ENCODE measurements at regions of chr14 and their contacts with region 1.

Region 1: GRCh38 chr14:92513204-92513973 is at the start of gene RIN3:
- DNase-seq: peak in 9 of 10 donors; percentile 18 to 68 (median 43)
- ATAC-seq: peak; percentile 52 to 62
- H3K4me3 Mint-ChIP-seq: peak within 1 kb of the TSS; percentile 59 to 88 (median 80)
- H3K27ac Mint-ChIP-seq: peak within 1 kb of the TSS; percentile 66 to 92 (median 84)
- H3K4me1 Mint-ChIP-seq: peaks cover 29 to 55% (median 54%) of the 10 kb centered on the region in 4 donors
- H3K27me3 Mint-ChIP-seq: no peaks in the 10 kb centered on the region
- polyA plus RNA-seq, gene RIN3: 16.8 to 45.8 (median 30.0) TPM

Region 2: DNA sequence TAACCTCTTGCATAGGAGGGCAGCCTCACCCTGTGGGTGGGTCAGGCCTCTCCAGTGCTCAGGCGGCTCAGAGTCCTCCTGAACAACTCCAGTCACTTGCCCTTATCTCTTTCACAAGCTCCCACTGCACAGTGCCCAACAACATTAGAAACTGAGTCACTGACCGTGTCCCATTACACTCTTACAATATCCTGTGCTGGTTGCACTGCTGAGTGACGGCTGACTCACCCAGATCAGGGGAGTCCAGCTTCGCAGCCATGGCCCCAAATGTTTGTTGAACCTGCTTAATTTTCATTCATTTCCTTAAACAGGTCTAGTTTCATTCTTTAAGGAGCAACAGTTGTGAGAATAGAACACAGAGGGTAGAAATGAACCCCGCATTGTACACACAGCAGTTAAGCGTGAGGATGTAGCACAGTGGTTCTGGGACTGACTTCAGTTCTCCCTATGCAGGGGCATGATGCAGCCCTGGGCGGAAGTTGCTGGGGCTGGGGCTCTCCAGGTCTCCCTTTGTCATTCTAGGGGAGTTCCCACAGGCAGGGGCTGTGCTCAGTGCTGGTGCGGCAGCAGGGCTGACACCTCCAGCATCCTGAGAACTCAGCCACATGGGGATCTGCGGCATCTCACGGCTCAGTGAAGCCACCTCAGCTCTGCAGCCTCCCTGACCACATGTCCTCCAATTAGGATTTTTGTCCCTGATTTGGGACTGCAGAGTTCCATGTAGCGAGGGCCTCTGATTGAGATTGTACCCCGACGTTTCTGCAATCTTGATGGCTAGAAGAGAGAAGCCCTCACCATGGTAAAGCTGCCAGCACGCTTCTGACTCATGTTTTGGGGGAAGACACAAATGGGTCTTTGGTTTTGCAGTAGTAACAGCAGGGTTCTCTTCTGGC is 1285.0 kb before region 1 on chr14:
- POLR2A ChIA-PET with region 1: no interaction called
- DNase-seq: peak; percentile 48 to 78 (median 64)
- ATAC-seq: peak; percentile 78 to 87
- H3K4me3 Mint-ChIP-seq: peak overlapping the region; percentile 26 to 84 (median 69)
- H3K27ac Mint-ChIP-seq: peak overlapping the region; percentile 4 to 95 (median 83)
- H3K4me1 Mint-ChIP-seq: peaks cover 38 to 92% (median 85%) of the 10 kb centered on the region in 4 donors
- H3K27me3 Mint-ChIP-seq: no peaks in the 10 kb centered on the region

Region 3: DNA sequence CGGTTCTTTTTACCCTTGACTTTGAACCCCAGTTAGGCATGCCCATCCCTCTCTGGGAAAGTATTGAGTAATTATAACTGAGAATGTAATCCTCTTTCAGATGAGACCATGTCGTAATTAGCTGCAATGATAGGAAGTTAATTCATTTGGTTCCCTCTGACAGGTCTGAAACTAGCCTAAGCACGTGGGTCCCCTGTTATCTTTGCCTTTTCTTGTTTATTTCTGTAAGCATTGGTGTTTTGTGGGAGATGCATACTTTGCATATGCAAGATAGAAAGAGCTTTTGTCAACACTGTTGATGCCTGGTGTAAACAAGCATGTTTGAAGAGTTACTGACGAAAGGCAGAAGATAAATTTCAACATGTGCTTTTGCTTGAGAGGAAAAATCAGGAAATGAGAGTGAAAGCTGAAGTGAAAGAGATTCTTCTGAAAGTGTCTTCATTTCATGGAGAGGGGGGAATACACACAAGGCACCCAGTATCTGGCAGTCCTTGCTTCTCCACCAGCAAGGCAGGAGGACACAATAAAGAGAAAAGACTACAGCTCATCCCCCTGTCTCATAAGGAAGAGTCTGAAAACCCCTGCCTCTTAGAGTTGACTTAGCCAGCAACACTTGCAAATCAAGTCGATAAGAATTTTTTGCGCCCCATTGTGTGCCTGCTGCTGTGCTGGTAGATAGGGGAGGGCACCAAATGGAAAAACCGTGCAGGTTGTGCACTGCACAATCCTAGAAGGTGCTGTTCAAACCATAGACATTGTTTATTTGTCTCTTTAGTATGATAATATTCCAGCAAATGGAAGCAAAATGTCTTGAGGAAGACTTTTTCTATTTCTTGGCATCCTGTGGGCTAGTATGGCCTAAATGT is 112.6 kb before region 1 on chr14:
- POLR2A ChIA-PET with region 1: no interaction called
- DNase-seq: no peak
- ATAC-seq: no peak
- H3K4me3 Mint-ChIP-seq: peak overlapping the region in 1 of 10 donors; percentile 3
- H3K27ac Mint-ChIP-seq: peak overlapping the region in 2 of 10 donors; percentile 4 to 23
- H3K4me1 Mint-ChIP-seq: peaks cover 0 to 21% (median under 1%) of the 10 kb centered on the region in 4 donors
- H3K27me3 Mint-ChIP-seq: peaks cover 0 to 3% (median 1%) of the 10 kb centered on the region in 5 donors

Region 4: DNA sequence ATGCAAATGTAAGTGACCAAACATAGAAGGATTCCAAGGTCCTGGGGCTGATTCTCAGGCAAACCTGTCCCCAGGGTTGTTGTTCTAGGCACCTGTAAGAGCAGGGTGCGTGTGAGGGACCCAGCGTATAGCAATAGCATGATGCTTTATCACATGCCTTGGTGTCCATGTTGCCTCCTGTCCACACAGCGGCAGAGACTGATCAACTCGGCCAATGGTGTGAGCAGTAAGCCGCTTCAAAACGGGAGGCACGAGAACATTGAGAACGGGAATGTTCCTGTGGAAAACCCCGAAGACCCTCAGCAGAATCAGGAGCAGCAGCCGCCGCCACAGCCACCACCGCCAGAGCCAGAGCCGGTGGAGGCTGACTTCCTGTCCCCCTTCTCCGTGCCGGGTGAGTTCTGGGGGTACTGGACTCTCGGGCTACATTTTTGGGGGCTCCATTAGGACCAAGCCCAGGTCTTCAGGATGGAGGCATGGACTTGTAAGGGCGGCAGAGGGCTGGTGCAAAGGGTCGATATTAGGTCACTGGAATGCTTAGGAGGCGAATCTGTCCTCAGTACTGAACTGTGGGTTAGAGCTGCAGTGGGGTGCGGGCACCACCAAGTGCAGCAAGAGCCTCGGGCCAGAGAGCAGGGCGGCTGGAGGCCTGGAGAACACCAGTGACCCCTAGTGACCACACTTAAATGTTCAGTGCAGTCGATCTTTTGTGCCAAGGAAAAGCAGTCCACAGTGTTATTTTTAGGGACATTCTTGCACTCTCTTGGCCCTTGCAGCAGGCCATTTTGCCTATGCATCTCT is 57.0 kb before region 1 on chr14:
- POLR2A ChIA-PET with region 1: no interaction called
- DNase-seq: no peak
- ATAC-seq: no peak
- H3K4me3 Mint-ChIP-seq: no peak overlapping the region
- H3K27ac Mint-ChIP-seq: peak overlapping the region in 2 of 10 donors; percentile 14 to 46
- H3K4me1 Mint-ChIP-seq: peaks cover 0 to 26% (median 17%) of the 10 kb centered on the region in 4 donors
- H3K27me3 Mint-ChIP-seq: no peaks in the 10 kb centered on the region

Region 5: GRCh38 chr14:92524602-92525185 is 11.3 kb after region 1 on chr14:
- POLR2A ChIA-PET with region 1: interaction called, 29 read pairs
- DNase-seq: no peak
- ATAC-seq: peak; percentile 53 to 59
- H3K4me3 Mint-ChIP-seq: peak overlapping the region in 5 of 10 donors; percentile 12 to 30 (median 24)
- H3K27ac Mint-ChIP-seq: peak overlapping the region in 9 of 10 donors; percentile 40 to 91 (median 79)
- H3K4me1 Mint-ChIP-seq: peaks cover 29 to 91% (median 76%) of the 10 kb centered on the region in 4 donors
- H3K27me3 Mint-ChIP-seq: no peaks in the 10 kb centered on the region

Region 6: GRCh38 chr14:92531106-92531873 is 17.9 kb after region 1 on chr14:
- POLR2A ChIA-PET with region 1: interaction called, 17 read pairs
- DNase-seq: peak; percentile 55 to 94 (median 86)
- ATAC-seq: peak; percentile 88 to 91
- H3K4me3 Mint-ChIP-seq: peak overlapping the region; percentile 68 to 92 (median 88)
- H3K27ac Mint-ChIP-seq: peak overlapping the region; percentile 97 to 100 (median 99)
- H3K4me1 Mint-ChIP-seq: peaks cover 38 to 91% (median 83%) of the 10 kb centered on the region in 4 donors
- H3K27me3 Mint-ChIP-seq: no peaks in the 10 kb centered on the region

Region 7: GRCh38 chr14:92568621-92569479 is 55.5 kb after region 1 on chr14:
- POLR2A ChIA-PET with region 1: interaction called, 11 read pairs
- DNase-seq: peak in 7 of 10 donors; percentile 21 to 66 (median 45)
- ATAC-seq: peak; percentile 84 to 87
- H3K4me3 Mint-ChIP-seq: peak overlapping the region; percentile 68 to 92 (median 86)
- H3K27ac Mint-ChIP-seq: peak overlapping the region; percentile 96 to 100 (median 99)
- H3K4me1 Mint-ChIP-seq: peaks cover 24 to 74% (median 69%) of the 10 kb centered on the region in 4 donors
- H3K27me3 Mint-ChIP-seq: no peaks in the 10 kb centered on the region